ENCODE measurements at regions of chr16 and their contacts with region 1.

Region 1: GRCh38 chr16:59988591-59988990 is 1254.5 kb upstream of the GOT2 start:
- DNase-seq: no peak
- H3K4me3 Mint-ChIP-seq: no peak overlapping the region
- H3K27ac Mint-ChIP-seq: no peak overlapping the region
- H3K4me1 Mint-ChIP-seq: no peaks in the 10 kb centered on the region
- H3K27me3 Mint-ChIP-seq: no peaks in the 10 kb centered on the region
- CTCF ChIP-seq: no peak

Region 2: GRCh38 chr16:59973966-59974365 is 14.6 kb before region 1 on chr16:
- CTCF ChIA-PET with region 1: no interaction called
- intact Hi-C with region 1: loop called (anchors 1 kb)
- DNase-seq: no peak
- H3K4me3 Mint-ChIP-seq: no peak overlapping the region
- H3K27ac Mint-ChIP-seq: no peak overlapping the region
- H3K4me1 Mint-ChIP-seq: no peaks in the 10 kb centered on the region
- H3K27me3 Mint-ChIP-seq: no peaks in the 10 kb centered on the region
- CTCF ChIP-seq: no peak